ENCODE measurements at regions of chr6 and their contacts with region 1.

Region 1: GRCh38 chr6:17431581-17431980 is 38.2 kb downstream of the CAP2 start:
- DNase-seq: peak; percentile 88
- ATAC-seq: peak; percentile 79
- H3K4me3 ChIP-seq: no peak overlapping the region
- H3K27ac ChIP-seq: no peak overlapping the region
- H3K4me1 ChIP-seq: peaks cover 9% of the 10 kb centered on the region
- H3K27me3 ChIP-seq: no peaks in the 10 kb centered on the region
- CTCF ChIP-seq: no peak
- POLR2A ChIP-seq: no peak
- RAD21 ChIP-seq: no peak

Region 2: DNA sequence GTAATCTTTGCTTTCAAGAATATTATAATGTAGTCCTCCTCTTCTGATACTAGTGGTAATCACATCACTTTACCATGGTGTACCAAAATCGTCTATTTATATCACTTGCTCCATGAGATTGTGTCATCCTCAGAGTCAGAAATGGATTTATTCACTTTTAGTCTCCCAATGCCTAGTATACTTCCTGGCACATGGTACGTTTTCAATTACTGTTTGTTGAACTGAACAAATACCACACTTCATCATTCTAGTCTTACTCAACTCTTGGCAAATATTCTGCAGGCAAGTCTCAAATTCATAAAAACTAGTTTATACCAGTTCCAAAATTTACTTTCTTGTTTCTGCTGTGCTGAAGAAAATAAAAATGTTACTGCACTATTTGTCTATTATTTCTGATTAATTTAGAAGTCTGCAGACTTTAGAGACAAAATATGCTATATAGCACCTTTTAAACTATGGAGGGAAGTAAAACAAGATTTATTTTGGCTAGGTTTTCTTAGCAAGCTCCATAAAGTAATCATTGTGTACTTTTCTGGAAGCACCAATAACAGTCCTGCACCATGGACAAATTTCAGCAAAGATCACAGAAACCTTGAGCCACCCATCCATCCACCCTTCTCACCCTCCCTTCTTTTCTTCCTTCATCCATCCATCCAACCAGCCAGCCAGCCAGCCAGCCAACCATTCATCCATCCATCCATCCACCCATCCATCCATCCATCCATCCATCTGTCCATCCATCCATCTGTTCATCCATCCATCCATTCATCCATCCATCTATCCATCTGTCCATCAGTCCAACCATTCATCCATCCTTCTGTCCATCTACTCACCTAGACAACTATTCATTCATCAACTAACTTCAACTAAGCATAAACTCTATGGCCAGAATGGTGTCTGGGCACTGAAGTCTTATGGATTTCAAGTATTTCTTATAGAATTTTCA is 431.8 kb before region 1 on chr6:
- CTCF ChIA-PET with region 1: no interaction called
- POLR2A ChIA-PET with region 1: interaction called, 18 read pairs
- dilution Hi-C with region 1: no loop called
- in situ Hi-C with region 1: no loop called
- intact Hi-C with region 1: no loop called
- DNase-seq: peak; percentile 94
- ATAC-seq: peak; percentile 81
- H3K4me3 ChIP-seq: no peak overlapping the region
- H3K27ac ChIP-seq: peak overlapping the region; percentile 72; the same call in 1 of the 2 replicates
- H3K4me1 ChIP-seq: peaks cover 6% of the 10 kb centered on the region
- H3K27me3 ChIP-seq: peaks cover 3% of the 10 kb centered on the region; the same call in 1 of the 2 replicates
- CTCF ChIP-seq: no peak
- POLR2A ChIP-seq: no peak
- RAD21 ChIP-seq: no peak